ENCODE measurements at regions of chr20 and their contacts with region 1.

Region 1: DNA sequence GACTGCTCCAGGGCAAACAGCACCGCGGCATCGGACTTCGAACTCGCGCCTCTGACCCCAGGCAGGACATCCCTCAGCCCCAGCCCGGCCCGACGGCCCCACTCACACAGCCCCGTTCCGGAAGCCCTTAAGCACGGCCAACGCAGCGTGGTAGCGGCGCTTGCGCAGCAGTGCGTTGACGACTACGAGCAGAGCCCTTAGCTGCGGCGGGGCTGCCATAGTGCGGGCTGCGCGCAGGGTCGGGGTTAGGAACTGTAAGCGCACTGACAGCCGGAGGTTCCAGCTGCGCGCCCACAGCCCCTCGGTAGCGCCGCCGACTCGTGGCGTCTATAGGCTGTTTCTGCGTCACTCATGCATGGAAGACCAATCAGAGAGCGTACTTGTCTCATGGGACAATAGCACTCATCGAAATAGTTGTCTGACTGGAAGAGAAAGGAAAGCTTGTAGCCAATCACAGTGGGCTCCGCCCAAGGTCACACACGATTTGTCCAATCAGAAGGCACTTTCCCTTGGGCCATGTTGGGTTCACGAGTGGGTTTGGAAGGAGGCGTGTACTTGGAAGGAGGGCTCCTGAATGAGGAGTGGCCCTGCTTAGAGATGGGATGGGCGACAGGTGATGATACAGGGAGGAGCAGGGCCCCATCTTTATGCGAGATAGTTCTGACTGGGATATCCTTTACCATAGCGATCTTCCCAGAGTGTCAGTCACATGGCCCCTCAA is at the start of gene PXMP4:
- DNase-seq: peak; percentile 68 to 97 (median 82)
- ATAC-seq: peak; percentile 94
- H3K4me3 ChIP-seq: peak within 1 kb of the TSS; percentile 66
- H3K4me3 Mint-ChIP-seq: peak within 1 kb of the TSS; percentile 83
- H3K27ac ChIP-seq: peak within 1 kb of the TSS; percentile 2 to 72
- H3K27ac Mint-ChIP-seq: peak within 1 kb of the TSS; percentile 60
- H3K4me1 ChIP-seq: peaks cover 20% of the 10 kb centered on the region
- H3K4me1 Mint-ChIP-seq: peaks cover 18% of the 10 kb centered on the region
- H3K27me3 ChIP-seq: no peaks in the 10 kb centered on the region
- H3K27me3 Mint-ChIP-seq: no peaks in the 10 kb centered on the region
- CTCF ChIP-seq: peak; percentile 13
- total RNA-seq, gene PXMP4: 3.6 to 4.1 TPM

Region 2: GRCh38 chr20:33408716-33409654 is 311.2 kb before region 1 on chr20:
- CTCF ChIA-PET with region 1: no interaction called
- POLR2A ChIA-PET with region 1: no interaction called
- intact Hi-C with region 1: loop called in 1 of 2 experiments (anchors 5 kb)
- DNase-seq: peak in 1 of 14 experiments; percentile 25
- ATAC-seq: no peak
- H3K4me3 ChIP-seq: no peak overlapping the region
- H3K4me3 Mint-ChIP-seq: no peak overlapping the region
- H3K27ac ChIP-seq: no peak overlapping the region
- H3K27ac Mint-ChIP-seq: no peak overlapping the region
- H3K4me1 ChIP-seq: peaks cover 12% of the 10 kb centered on the region
- H3K4me1 Mint-ChIP-seq: peaks cover 3% of the 10 kb centered on the region
- H3K27me3 ChIP-seq: no peaks in the 10 kb centered on the region
- H3K27me3 Mint-ChIP-seq: no peaks in the 10 kb centered on the region
- CTCF ChIP-seq: no peak

Region 3: DNA sequence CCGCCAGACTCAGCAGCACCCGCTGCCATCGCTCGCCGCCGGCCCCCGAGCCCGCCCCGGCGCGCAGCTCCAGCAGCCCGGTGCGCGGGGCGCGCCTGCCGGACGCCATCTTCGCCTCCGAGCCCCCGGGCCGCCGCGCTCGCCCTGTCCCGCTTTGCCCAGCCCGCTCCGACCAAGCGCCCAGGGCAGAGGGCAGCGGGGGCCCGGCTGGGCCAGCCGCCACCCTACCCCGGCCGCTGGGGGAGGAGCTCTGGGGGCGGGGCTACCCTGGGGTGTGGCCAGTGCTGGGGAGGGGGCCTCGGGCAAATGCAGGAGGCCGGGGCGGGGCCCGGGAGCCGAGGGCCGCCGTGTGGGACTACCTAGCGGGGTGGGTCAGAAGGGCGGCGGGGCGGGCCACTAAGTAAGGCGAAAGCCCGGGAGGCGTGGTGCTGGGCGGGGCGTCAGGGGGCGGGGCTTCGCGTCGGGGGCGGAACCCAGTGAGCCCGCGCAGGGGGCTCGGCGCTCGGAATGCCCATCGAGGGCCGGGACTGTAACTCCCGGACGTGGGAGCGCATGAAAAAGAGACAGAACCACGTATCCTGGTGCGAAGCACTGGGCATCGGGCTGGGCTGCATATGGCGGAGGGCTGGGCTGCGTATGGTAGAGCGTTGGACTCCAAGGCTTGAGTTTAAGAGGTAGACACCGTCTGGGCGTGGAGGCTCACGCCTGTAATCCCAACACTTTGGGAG is 276.5 kb before region 1 on chr20 and contains the start of gene SNTA1:
- CTCF ChIA-PET with region 1: no interaction called
- POLR2A ChIA-PET with region 1: interaction called, 14 read pairs
- intact Hi-C with region 1: no loop called
- DNase-seq: peak; percentile 74 to 95 (median 86)
- ATAC-seq: peak; percentile 57
- H3K4me3 ChIP-seq: peak within 1 kb of the TSS; percentile 90
- H3K4me3 Mint-ChIP-seq: peak within 1 kb of the TSS; percentile 95
- H3K27ac ChIP-seq: peak within 1 kb of the TSS; percentile 72 to 80
- H3K27ac Mint-ChIP-seq: peak within 1 kb of the TSS; percentile 94
- H3K4me1 ChIP-seq: peaks cover 25% of the 10 kb centered on the region
- H3K4me1 Mint-ChIP-seq: peaks cover 22% of the 10 kb centered on the region
- H3K27me3 ChIP-seq: no peaks in the 10 kb centered on the region
- H3K27me3 Mint-ChIP-seq: no peaks in the 10 kb centered on the region
- CTCF ChIP-seq: no peak
- total RNA-seq, gene SNTA1: 5.0 to 5.2 TPM

Region 4: GRCh38 chr20:33539129-33539528 is 181.0 kb before region 1 on chr20:
- CTCF ChIA-PET with region 1: no interaction called
- POLR2A ChIA-PET with region 1: no interaction called
- intact Hi-C with region 1: no loop called
- DNase-seq: no peak
- ATAC-seq: no peak
- H3K4me3 ChIP-seq: no peak overlapping the region
- H3K4me3 Mint-ChIP-seq: no peak overlapping the region
- H3K27ac ChIP-seq: no peak overlapping the region
- H3K27ac Mint-ChIP-seq: no peak overlapping the region
- H3K4me1 ChIP-seq: no peaks in the 10 kb centered on the region
- H3K4me1 Mint-ChIP-seq: peaks cover 31% of the 10 kb centered on the region
- H3K27me3 ChIP-seq: no peaks in the 10 kb centered on the region
- H3K27me3 Mint-ChIP-seq: no peaks in the 10 kb centered on the region
- CTCF ChIP-seq: no peak

Region 5: GRCh38 chr20:33679758-33680485 is 40.2 kb before region 1 on chr20:
- CTCF ChIA-PET with region 1: no interaction called
- POLR2A ChIA-PET with region 1: interaction called, 12 read pairs
- intact Hi-C with region 1: no loop called
- DNase-seq: peak in 6 of 14 experiments; percentile 30 to 85 (median 68)
- ATAC-seq: peak; percentile 53
- H3K4me3 ChIP-seq: no peak overlapping the region
- H3K4me3 Mint-ChIP-seq: peak overlapping the region; percentile 51
- H3K27ac ChIP-seq: peak overlapping the region in 1 of 2 donors; percentile 45
- H3K27ac Mint-ChIP-seq: peak overlapping the region; percentile 66
- H3K4me1 ChIP-seq: peaks cover 63% of the 10 kb centered on the region
- H3K4me1 Mint-ChIP-seq: peaks cover 49% of the 10 kb centered on the region
- H3K27me3 ChIP-seq: no peaks in the 10 kb centered on the region
- H3K27me3 Mint-ChIP-seq: no peaks in the 10 kb centered on the region
- CTCF ChIP-seq: no peak

Region 6: GRCh38 chr20:33686100-33686983 is 33.8 kb before region 1 on chr20 and contains the start of gene E2F1:
- CTCF ChIA-PET with region 1: no interaction called
- POLR2A ChIA-PET with region 1: interaction called, 19 read pairs
- intact Hi-C with region 1: loop called in 1 of 2 experiments (anchors 2 kb)
- DNase-seq: peak; percentile 81 to 97 (median 94)
- ATAC-seq: peak; percentile 94
- H3K4me3 ChIP-seq: peak within 1 kb of the TSS; percentile 47
- H3K4me3 Mint-ChIP-seq: peak within 1 kb of the TSS; percentile 89
- H3K27ac ChIP-seq: no peak within 1 kb of the TSS
- H3K27ac Mint-ChIP-seq: peak within 1 kb of the TSS; percentile 39
- H3K4me1 ChIP-seq: peaks cover 50% of the 10 kb centered on the region
- H3K4me1 Mint-ChIP-seq: peaks cover 50% of the 10 kb centered on the region
- H3K27me3 ChIP-seq: no peaks in the 10 kb centered on the region
- H3K27me3 Mint-ChIP-seq: no peaks in the 10 kb centered on the region
- CTCF ChIP-seq: peak; percentile 23
- total RNA-seq, gene E2F1: 1.2 to 1.6 TPM